ENCODE measurements at regions of chr6 and their contacts with region 1.

Region 1: GRCh38 chr6:39892490-39893129 is 41.7 kb downstream of the MOCS1 start:
- DNase-seq: peak in 1 of 2 experiments; percentile 49
- H3K4me3 ChIP-seq: no peak overlapping the region
- H3K4me1 ChIP-seq: no peaks in the 10 kb centered on the region
- H3K27me3 ChIP-seq: no peaks in the 10 kb centered on the region

Region 2: DNA sequence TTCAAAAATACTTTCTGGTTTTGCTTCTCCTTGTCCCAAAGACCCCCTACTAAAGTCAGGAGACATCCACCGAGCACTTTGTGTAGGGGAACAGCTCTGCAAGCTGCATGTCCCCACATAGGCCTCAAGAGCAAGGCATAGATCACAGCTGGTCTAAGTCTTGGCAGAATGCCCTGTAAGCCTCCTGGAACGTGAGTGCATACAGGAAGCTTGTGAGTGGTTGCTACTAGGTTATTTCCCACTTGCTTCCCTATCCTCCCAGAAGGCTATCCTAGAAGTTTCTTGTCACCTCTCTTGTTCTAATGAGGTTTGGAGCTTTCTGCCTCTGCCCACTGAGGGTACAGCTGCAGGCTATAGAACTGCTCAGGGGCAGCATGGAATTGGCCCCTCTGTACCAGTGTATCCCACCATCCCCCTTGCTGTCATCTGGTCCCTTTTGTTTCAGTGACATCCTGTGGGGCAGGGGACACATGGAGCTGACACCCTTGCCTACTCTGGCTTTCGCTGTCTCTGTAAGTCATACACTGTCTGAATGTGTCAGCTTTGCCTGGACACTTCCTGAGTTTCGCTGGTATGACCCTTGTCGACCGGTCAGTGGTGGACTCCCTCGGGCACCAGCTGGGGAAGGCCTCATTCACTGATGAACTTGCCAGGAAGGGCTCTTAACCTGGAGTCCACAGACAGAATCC is 534.5 kb before region 1 on chr6:
- in situ Hi-C with region 1: loop called (anchors 10 kb)
- DNase-seq: no peak
- H3K4me3 ChIP-seq: no peak overlapping the region
- H3K4me1 ChIP-seq: no peaks in the 10 kb centered on the region
- H3K27me3 ChIP-seq: no peaks in the 10 kb centered on the region

Region 3: GRCh38 chr6:40308533-40309306 is 416.1 kb after region 1 on chr6:
- in situ Hi-C with region 1: loop called (anchors 25 kb)
- DNase-seq: peak in 1 of 2 experiments; percentile 80
- H3K4me3 ChIP-seq: no peak overlapping the region
- H3K4me1 ChIP-seq: no peaks in the 10 kb centered on the region
- H3K27me3 ChIP-seq: no peaks in the 10 kb centered on the region

Region 4: DNA sequence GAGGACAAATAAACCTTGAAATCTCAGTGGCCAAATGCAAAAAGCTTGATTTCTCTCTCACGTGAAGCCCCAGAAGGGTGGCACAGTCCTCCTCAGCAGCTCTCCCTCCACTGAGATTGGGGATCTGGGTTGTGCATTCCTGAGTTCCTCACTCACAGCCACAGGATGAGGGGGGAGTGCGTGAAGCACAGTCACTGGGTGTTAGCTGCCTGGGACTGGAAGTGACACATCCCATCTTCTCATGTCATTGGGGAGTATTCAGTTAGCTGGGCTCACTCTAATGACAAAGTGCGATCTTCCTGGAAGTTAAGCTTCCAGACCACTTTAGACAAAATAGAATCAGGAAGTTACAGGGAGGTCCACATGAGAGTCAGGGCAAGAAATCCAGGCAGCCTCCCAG is 886.8 kb after region 1 on chr6:
- in situ Hi-C with region 1: no loop called
- DNase-seq: no peak
- H3K4me3 ChIP-seq: no peak overlapping the region
- H3K4me1 ChIP-seq: no peaks in the 10 kb centered on the region
- H3K27me3 ChIP-seq: no peaks in the 10 kb centered on the region

Measured in HAP-1 (cell line).